ENCODE measurements at regions of chr5 and their contacts with region 1.

Region 1: DNA sequence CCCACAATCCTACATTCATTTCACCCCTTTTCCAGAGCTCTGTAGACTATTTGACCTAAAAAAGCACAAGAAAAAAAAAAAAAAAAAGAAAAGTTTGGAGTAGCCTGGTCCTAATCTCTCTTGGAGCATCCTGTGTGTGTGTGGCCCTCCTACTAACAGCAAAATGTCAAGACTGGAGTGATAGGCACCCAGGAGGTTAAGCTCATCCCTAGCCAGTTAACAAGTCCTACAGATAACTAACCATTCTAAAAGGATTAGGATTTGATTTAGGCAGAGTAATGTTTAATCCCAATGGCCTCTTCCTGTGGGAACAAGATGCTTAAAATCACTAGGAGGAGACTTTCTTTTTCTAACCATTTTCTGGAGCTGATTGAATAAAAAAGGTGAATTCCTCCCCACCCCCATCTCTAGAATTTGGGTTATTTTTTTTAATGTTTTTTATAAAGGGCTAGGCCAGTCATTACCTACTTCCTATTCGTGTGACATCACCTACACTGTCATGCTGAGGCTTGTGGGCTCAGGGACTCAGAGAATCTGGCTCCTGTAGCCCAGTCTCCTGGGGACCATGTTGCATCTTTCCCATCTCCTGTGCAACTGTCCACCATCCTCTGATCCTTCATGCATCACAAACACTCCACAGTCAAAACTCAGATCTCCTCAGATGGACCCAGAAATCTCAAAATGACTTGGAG is 43.2 kb upstream of the NR3C1 start:
- DNase-seq: no peak
- ATAC-seq: no peak
- H3K4me3 ChIP-seq: no peak overlapping the region
- H3K27ac ChIP-seq: no peak overlapping the region
- H3K4me1 ChIP-seq: no peaks in the 10 kb centered on the region
- H3K27me3 ChIP-seq: no peaks in the 10 kb centered on the region
- CTCF ChIP-seq: no peak

Region 2: DNA sequence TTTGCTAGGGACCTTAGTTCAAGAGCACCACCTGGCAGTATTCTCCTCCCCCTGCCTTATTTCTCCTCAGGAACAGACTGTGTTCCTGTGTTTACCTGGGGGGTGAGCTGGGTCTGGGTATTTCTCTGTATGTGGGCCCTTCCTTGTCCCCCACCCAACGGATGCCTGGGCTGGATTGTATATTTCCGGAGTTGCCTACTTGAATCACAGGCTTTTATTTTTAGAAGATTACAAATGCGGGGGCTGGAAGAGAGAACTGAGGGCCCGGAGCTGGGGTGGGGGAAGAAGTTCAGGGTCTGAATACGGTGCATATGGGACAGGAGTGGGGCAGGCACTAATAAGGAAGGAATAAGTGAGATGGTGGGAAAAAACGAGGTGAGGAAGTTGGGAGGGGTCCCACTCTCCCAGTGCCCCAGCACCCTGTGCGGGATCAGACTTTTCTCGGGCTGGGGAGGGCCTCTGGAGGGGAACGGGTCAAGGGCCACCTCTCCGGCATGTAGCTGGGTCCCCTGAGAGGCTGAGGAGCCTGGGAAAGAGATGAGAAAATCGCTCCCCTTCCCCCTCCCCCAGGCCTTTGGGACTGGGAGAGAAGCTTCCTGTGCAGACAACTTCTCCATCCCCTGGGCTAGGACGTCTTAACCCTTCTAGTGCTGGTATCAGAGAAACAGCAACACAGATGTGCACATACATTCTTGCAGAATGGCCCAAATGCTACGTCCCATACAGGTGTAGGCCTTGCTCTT is 1610.6 kb before region 1 on chr5:
- CTCF ChIA-PET with region 1: no interaction called
- POLR2A ChIA-PET with region 1: no interaction called
- in situ Hi-C with region 1: no loop called
- intact Hi-C with region 1: no loop called
- DNase-seq: no peak
- ATAC-seq: no peak
- H3K4me3 ChIP-seq: no peak overlapping the region
- H3K27ac ChIP-seq: no peak overlapping the region
- H3K4me1 ChIP-seq: no peaks in the 10 kb centered on the region
- H3K27me3 ChIP-seq: peaks cover under 1% of the 10 kb centered on the region; the same call in 1 of the 2 replicates
- CTCF ChIP-seq: no peak

Region 3: GRCh38 chr5:143471041-143471521 is 24.4 kb after region 1 on chr5:
- CTCF ChIA-PET with region 1: no interaction called
- POLR2A ChIA-PET with region 1: no interaction called
- in situ Hi-C with region 1: no loop called
- intact Hi-C with region 1: no loop called
- DNase-seq: no peak
- ATAC-seq: peak; percentile 53; the same call in 1 of the 2 replicates
- H3K4me3 ChIP-seq: no peak overlapping the region
- H3K27ac ChIP-seq: no peak overlapping the region
- H3K4me1 ChIP-seq: no peaks in the 10 kb centered on the region
- H3K27me3 ChIP-seq: no peaks in the 10 kb centered on the region
- CTCF ChIP-seq: no peak

Region 4: GRCh38 chr5:144114571-144114970 is 667.9 kb after region 1 on chr5:
- CTCF ChIA-PET with region 1: no interaction called
- POLR2A ChIA-PET with region 1: interaction called, 10 read pairs
- in situ Hi-C with region 1: no loop called
- intact Hi-C with region 1: no loop called
- DNase-seq: no peak
- ATAC-seq: no peak
- H3K4me3 ChIP-seq: no peak overlapping the region
- H3K27ac ChIP-seq: no peak overlapping the region
- H3K4me1 ChIP-seq: no peaks in the 10 kb centered on the region
- H3K27me3 ChIP-seq: no peaks in the 10 kb centered on the region
- CTCF ChIP-seq: no peak